Activated CD4-positive, alpha-beta T cell treated with anti-CD3 and anti-CD28 coated beads for 36 hours (primary cell): ENCODE measurements at regions of chr16 and their contacts with region 1.

Region 1: GRCh38 chr16:4253394-4254150 is 11.7 kb upstream of the SRL start:
- DNase-seq: peak; percentile 100
- ATAC-seq: peak; percentile 98
- H3K4me3 Mint-ChIP-seq: peak overlapping the region; percentile 92
- H3K27ac Mint-ChIP-seq: peak overlapping the region; percentile 96
- H3K4me1 Mint-ChIP-seq: peaks cover 3% of the 10 kb centered on the region
- H3K27me3 Mint-ChIP-seq: no peaks in the 10 kb centered on the region

Region 2: GRCh38 chr16:3690470-3690928 is 563.1 kb before region 1 on chr16:
- CTCF ChIA-PET with region 1: no interaction called
- POLR2A ChIA-PET with region 1: no interaction called
- intact Hi-C with region 1: loop called in 1 of 2 experiments (anchors 1 kb)
- DNase-seq: peak; percentile 90
- ATAC-seq: peak; percentile 99
- H3K4me3 Mint-ChIP-seq: no peak overlapping the region
- H3K27ac Mint-ChIP-seq: no peak overlapping the region
- H3K4me1 Mint-ChIP-seq: peaks cover 7% of the 10 kb centered on the region
- H3K27me3 Mint-ChIP-seq: no peaks in the 10 kb centered on the region

Region 3: GRCh38 chr16:3938848-3939624 is 314.5 kb before region 1 on chr16:
- CTCF ChIA-PET with region 1: interaction called, 21 read pairs
- POLR2A ChIA-PET with region 1: no interaction called
- intact Hi-C with region 1: loop called in 1 of 2 experiments (anchors 1 kb)
- DNase-seq: peak; percentile 79
- ATAC-seq: peak; percentile 91
- H3K4me3 Mint-ChIP-seq: no peak overlapping the region
- H3K27ac Mint-ChIP-seq: no peak overlapping the region
- H3K4me1 Mint-ChIP-seq: peaks cover 2% of the 10 kb centered on the region
- H3K27me3 Mint-ChIP-seq: peaks cover 4% of the 10 kb centered on the region

Region 4: GRCh38 chr16:4090351-4090851 is 163.2 kb before region 1 on chr16:
- CTCF ChIA-PET with region 1: no interaction called
- POLR2A ChIA-PET with region 1: no interaction called
- intact Hi-C with region 1: no loop called
- DNase-seq: no peak
- ATAC-seq: no peak
- H3K4me3 Mint-ChIP-seq: no peak overlapping the region
- H3K27ac Mint-ChIP-seq: no peak overlapping the region
- H3K4me1 Mint-ChIP-seq: no peaks in the 10 kb centered on the region
- H3K27me3 Mint-ChIP-seq: no peaks in the 10 kb centered on the region

Region 5: GRCh38 chr16:4106516-4106915 is 147.1 kb before region 1 on chr16:
- CTCF ChIA-PET with region 1: no interaction called
- POLR2A ChIA-PET with region 1: no interaction called
- intact Hi-C with region 1: no loop called
- DNase-seq: no peak
- ATAC-seq: no peak
- H3K4me3 Mint-ChIP-seq: no peak overlapping the region
- H3K27ac Mint-ChIP-seq: no peak overlapping the region
- H3K4me1 Mint-ChIP-seq: peaks cover 15% of the 10 kb centered on the region
- H3K27me3 Mint-ChIP-seq: no peaks in the 10 kb centered on the region

Region 6: GRCh38 chr16:4183237-4184036 is 70.1 kb before region 1 on chr16:
- CTCF ChIA-PET with region 1: interaction called, 7 read pairs
- POLR2A ChIA-PET with region 1: no interaction called
- intact Hi-C with region 1: loop called in 1 of 2 experiments (anchors 1 kb)
- DNase-seq: peak; percentile 94
- ATAC-seq: peak; percentile 95
- H3K4me3 Mint-ChIP-seq: peak overlapping the region; percentile 76
- H3K27ac Mint-ChIP-seq: peak overlapping the region; percentile 47
- H3K4me1 Mint-ChIP-seq: peaks cover 6% of the 10 kb centered on the region
- H3K27me3 Mint-ChIP-seq: no peaks in the 10 kb centered on the region

Region 7: DNA sequence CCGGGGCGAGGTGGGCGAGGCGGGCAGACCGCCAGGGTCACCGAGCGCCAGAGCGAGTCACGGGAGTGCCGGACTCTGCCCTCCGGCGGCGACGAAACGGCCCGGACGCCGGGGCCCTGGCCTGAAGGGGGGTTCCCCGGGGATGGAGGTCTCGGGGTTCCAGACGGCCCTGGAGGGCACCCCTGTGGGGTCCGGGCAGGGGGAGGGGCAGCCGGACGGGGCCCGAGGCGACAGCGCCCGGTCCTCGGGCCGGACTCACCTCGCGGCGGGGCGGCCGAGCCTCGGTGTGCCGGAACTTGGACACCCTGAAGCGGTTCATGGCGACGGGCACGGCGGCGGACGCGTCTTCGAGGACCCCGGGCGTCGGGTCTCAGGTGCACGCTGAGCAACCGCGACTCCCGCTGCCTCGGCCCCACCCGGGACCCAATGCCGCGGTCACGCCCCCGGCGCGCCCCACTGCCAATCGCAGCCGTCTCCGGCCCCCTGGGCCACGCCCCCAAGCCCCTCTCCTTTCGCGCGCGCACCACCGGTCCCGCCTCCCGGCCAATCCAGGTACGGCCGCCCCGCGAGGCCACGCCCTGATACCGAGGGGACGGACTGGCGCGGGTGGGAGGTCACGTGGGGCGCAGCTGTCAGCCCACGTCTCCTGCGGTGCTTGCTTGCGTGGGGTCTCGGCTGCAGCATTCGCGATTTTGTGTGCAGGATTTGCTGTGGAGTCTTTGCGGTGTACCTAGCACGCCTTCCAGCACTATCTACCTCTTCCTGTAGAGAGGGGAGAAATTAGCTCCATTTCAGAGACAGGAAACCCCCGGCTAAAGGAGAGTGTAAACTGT is 162.8 kb after region 1 on chr16 and contains the start of gene CORO7:
- CTCF ChIA-PET with region 1: interaction called, 13 read pairs
- POLR2A ChIA-PET with region 1: interaction called, 3 read pairs
- intact Hi-C with region 1: loop called in 1 of 2 experiments (anchors 1 kb)
- DNase-seq: peak; percentile 98
- ATAC-seq: peak; percentile 81
- H3K4me3 Mint-ChIP-seq: peak within 1 kb of the TSS; percentile 86
- H3K27ac Mint-ChIP-seq: peak within 1 kb of the TSS; percentile 84
- H3K4me1 Mint-ChIP-seq: peaks cover 29% of the 10 kb centered on the region
- H3K27me3 Mint-ChIP-seq: no peaks in the 10 kb centered on the region
- total RNA-seq, gene CORO7: 65.0 to 67.1 TPM

Region 8: DNA sequence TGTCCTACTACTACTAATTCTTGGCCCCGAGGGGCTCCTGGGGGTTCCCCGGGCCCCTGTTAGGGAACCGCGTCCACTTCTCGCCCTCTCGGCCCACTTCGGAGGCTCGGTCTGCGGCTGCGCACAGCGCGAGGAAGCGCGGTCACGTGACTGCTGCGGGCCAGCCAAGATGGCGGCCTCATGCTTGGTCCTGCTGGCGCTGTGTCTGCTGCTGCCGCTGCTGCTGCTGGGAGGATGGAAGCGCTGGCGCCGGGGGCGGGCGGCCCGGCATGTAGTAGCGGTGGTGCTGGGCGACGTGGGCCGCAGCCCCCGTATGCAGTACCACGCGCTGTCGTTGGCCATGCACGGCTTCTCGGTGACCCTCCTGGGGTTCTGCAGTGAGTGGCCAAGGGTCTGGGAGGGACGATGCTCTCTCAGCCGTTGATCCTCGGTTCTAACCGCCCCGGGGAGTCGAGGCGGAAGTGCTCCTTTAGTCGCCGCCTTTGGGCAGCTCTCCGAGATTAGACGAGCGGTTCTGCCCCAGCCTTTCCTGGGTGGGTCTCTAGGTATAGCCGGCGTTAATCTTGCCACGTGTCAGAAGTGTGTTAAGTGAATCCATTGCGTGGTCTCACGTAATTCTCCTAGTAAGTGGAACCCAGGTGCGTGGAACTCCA is 818.2 kb after region 1 on chr16 and contains the start of gene ALG1:
- CTCF ChIA-PET with region 1: no interaction called
- POLR2A ChIA-PET with region 1: no interaction called
- intact Hi-C with region 1: loop called in 1 of 2 experiments (anchors 10 kb)
- DNase-seq: peak; percentile 94
- ATAC-seq: peak; percentile 97
- H3K4me3 Mint-ChIP-seq: peak within 1 kb of the TSS; percentile 90
- H3K27ac Mint-ChIP-seq: peak within 1 kb of the TSS; percentile 90
- H3K4me1 Mint-ChIP-seq: peaks cover 21% of the 10 kb centered on the region
- H3K27me3 Mint-ChIP-seq: no peaks in the 10 kb centered on the region
- total RNA-seq, gene ALG1: 15.7 to 18.1 TPM